MCF 10A (cell line): ENCODE measurements at regions of chr19 and their contacts with region 1.

Region 1: DNA sequence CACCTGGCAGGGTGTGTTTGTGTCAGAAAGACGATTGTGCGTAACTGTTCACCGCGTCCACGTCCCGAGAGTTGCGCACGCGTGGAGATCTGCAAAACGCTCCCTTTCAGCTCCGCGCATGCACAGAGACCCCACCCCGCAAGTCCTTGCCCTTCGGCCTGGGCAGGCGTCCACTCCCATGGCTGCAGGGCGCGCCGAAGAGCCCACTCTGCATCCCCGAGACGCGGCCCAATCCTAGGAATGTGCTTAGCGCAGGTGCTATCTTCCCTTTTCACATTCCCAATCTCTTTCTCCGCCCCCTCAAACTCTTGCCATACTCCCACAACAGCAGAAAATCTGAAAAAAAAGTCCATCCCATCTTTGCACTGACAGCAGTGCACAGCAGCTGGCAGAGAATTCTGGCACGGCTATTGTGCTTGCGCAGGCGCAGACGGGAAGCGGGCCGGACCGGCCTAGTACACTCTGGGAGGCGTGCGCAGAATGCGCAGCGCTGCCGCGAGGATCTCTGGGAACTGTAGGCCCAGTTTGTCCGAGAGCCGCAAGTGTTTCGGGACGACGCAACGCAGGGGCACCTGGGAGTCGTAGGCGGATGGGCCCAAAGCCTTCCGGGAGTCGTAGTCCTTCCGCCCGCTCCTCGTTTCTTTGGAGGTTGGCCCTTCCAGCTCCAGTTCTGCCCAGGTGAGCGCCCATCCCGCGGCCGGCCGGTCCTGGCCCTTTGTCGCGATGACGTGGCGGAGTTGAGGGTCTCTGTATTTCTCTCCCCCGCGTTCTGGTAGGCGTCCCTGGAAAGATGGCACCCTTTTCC is 23.1 kb downstream of the ZNF175 start:
- DNase-seq: peak; percentile 98
- H3K4me3 Mint-ChIP-seq: peak overlapping the region; percentile 86
- H3K27ac Mint-ChIP-seq: peak overlapping the region; percentile 52
- H3K4me1 Mint-ChIP-seq: peaks cover 20% of the 10 kb centered on the region
- H3K27me3 Mint-ChIP-seq: no peaks in the 10 kb centered on the region
- CTCF ChIP-seq: no peak

Region 2: GRCh38 chr19:51441410-51442390 is 152.5 kb before region 1 on chr19:
- CTCF ChIA-PET with region 1: no interaction called
- POLR2A ChIA-PET with region 1: no interaction called
- intact Hi-C with region 1: no loop called
- DNase-seq: peak; percentile 16
- H3K4me3 Mint-ChIP-seq: no peak overlapping the region
- H3K27ac Mint-ChIP-seq: no peak overlapping the region
- H3K4me1 Mint-ChIP-seq: no peaks in the 10 kb centered on the region
- H3K27me3 Mint-ChIP-seq: peaks cover 26% of the 10 kb centered on the region
- CTCF ChIP-seq: no peak

Region 3: GRCh38 chr19:51570962-51571575 is 23.1 kb before region 1 on chr19 and contains the start of gene ZNF175:
- CTCF ChIA-PET with region 1: interaction called, 4 read pairs
- POLR2A ChIA-PET with region 1: interaction called, 12 read pairs
- intact Hi-C with region 1: loop called (anchors 1 kb)
- DNase-seq: peak; percentile 98
- H3K4me3 Mint-ChIP-seq: peak within 1 kb of the TSS; percentile 97
- H3K27ac Mint-ChIP-seq: peak within 1 kb of the TSS; percentile 99
- H3K4me1 Mint-ChIP-seq: peaks cover 9% of the 10 kb centered on the region
- H3K27me3 Mint-ChIP-seq: peaks cover 13% of the 10 kb centered on the region
- CTCF ChIP-seq: no peak
- total RNA-seq, gene ZNF175: 6.9 and 9.3 TPM in 2 replicates